Mucosa of descending colon (tissue), 3 donors: ENCODE measurements at regions of chr14 and their contacts with region 1.

Region 1: DNA sequence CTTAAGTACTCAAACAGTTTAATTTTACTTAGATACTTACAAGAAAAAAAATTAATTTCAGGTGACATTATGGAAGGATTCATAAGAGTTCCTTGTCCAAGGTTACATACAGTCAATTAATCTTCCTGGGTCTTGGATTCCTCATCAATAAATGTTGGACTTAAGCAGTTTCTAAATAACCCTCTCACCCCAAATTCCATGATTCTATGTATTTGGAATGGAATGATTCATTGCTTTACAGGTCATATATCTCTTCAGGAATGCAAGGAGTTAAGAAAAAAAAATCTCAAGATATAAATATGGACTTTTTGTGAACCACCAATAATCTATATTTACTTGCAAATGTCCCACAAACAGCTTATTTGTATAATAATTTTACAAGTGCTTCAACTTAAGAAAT is 84.2 kb upstream of the BMP4 start:
- DNase-seq: no peak
- ATAC-seq: no peak
- H3K4me3 ChIP-seq: no peak overlapping the region
- H3K4me1 ChIP-seq: no peaks in the 10 kb centered on the region
- CTCF ChIP-seq: no peak

Region 2: GRCh38 chr14:54108481-54109471 is 67.9 kb after region 1 on chr14:
- intact Hi-C with region 1: no loop called
- DNase-seq: no peak
- ATAC-seq: no peak
- H3K4me3 ChIP-seq: no peak overlapping the region
- H3K4me1 ChIP-seq: no peaks in the 10 kb centered on the region
- CTCF ChIP-seq: no peak

Region 3: GRCh38 chr14:54338696-54339317 is 298.0 kb after region 1 on chr14:
- intact Hi-C with region 1: loop called in 1 of 2 experiments (anchors 10 kb)
- DNase-seq: peak in 1 of 3 donors; percentile 28
- ATAC-seq: peak; percentile 56
- H3K4me3 ChIP-seq: no peak overlapping the region
- H3K4me1 ChIP-seq: peaks cover under 1% of the 10 kb centered on the region
- CTCF ChIP-seq: no peak